Dorsolateral prefrontal cortex (tissue), 120 donors: ENCODE measurements at regions of chr10 and their contacts with region 1.

Region 1: GRCh38 chr10:17643755-17644484 is at the start of gene STAM:
- DNase-seq: peak; percentile 73 to 89 (median 83)
- H3K4me3 ChIP-seq: peak within 1 kb of the TSS; percentile 69 to 100 (median 93)
- H3K27ac ChIP-seq: peak within 1 kb of the TSS; percentile 96 to 100 (median 99)
- H3K27me3 ChIP-seq: no peaks in the 10 kb centered on the region
- CTCF ChIP-seq: peak in 30 of 56 donors; percentile 2 to 58 (median 28)
- total RNA-seq, gene STAM: 23.2 to 54.6 (median 40.5) TPM

Region 2: GRCh38 chr10:17617031-17617911 is 26.6 kb before region 1 on chr10 and contains the start of gene HACD1:
- intact Hi-C with region 1: loop called (anchors 2 kb)
- DNase-seq: peak; percentile 54 to 80 (median 60)
- H3K4me3 ChIP-seq: peak within 1 kb of the TSS; percentile 64 to 98 (median 84)
- H3K27ac ChIP-seq: peak within 1 kb of the TSS in 52 of 59 donors; percentile 10 to 90 (median 72)
- H3K27me3 ChIP-seq: no peaks in the 10 kb centered on the region
- CTCF ChIP-seq: peak in 44 of 56 donors; percentile 11 to 68 (median 34)
- total RNA-seq, gene HACD1: 3.5 to 13.4 (median 8.0) TPM

Region 3: DNA sequence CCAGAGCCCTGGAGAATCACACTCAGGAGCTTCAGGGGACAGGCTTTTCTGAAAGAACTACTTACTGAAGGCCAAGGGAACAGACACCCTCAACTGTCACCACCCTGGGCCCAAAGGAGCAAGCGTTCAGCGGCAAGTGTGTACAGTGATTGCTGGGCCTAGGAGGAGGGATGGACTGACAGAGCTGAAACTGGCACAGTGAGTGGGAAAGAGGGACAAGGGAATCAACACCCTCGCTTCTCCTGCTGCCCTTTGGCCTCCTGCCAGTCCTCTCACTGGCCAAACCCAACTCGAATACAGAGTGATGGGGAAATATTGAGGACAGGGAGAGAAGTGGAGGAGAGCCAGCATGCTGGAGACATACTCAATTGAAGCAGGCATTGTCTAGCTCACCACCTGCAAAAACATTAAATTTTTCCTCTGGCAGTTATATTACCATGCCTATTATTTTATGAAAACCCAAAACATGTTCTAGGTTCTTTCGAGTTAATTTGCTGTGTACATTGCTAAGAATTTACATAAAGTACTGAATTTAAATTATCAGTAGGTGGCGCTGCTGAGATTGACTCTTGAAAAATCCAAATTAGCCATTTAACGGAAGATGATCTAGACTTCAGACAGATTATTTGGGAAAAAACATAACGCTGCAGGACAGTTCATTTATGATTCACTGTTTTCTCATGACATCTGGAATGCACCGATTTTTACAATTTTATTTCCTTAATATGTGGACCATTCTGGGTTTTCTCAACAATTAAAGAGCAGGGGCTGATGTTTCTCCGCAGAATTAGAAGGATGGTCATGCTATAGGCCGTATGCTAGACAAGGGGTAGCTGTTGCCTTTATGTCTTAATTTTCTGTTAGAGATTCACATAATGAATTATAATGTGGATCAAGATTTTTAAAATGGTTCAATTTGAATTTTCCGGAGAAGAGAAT is 93.4 kb after region 1 on chr10:
- intact Hi-C with region 1: loop called in 1 of 2 experiments (anchors 5 kb)
- DNase-seq: peak in 1 of 10 donors; percentile 41
- H3K4me3 ChIP-seq: peak overlapping the region in 1 of 59 donors; percentile 3
- H3K27ac ChIP-seq: peak overlapping the region in 1 of 59 donors; percentile 49
- H3K27me3 ChIP-seq: no peaks in the 10 kb centered on the region
- CTCF ChIP-seq: peak; percentile 47 to 82 (median 72)

Region 4: GRCh38 chr10:18659120-18659818 is 1015.3 kb after region 1 on chr10 and contains the start of gene ARL5B:
- intact Hi-C with region 1: loop called in 1 of 2 experiments (anchors 10 kb)
- DNase-seq: peak; percentile 90 to 98 (median 96)
- H3K4me3 ChIP-seq: peak within 1 kb of the TSS; percentile 63 to 100 (median 94)
- H3K27ac ChIP-seq: peak within 1 kb of the TSS; percentile 47 to 97 (median 92)
- H3K27me3 ChIP-seq: no peaks in the 10 kb centered on the region
- CTCF ChIP-seq: peak in 14 of 56 donors; percentile 5 to 35 (median 22)
- total RNA-seq, gene ARL5B: 8.6 to 19.9 (median 13.1) TPM